WTC11 (cell line): ENCODE measurements at regions of chr10 and their contacts with region 1.

Region 1: DNA sequence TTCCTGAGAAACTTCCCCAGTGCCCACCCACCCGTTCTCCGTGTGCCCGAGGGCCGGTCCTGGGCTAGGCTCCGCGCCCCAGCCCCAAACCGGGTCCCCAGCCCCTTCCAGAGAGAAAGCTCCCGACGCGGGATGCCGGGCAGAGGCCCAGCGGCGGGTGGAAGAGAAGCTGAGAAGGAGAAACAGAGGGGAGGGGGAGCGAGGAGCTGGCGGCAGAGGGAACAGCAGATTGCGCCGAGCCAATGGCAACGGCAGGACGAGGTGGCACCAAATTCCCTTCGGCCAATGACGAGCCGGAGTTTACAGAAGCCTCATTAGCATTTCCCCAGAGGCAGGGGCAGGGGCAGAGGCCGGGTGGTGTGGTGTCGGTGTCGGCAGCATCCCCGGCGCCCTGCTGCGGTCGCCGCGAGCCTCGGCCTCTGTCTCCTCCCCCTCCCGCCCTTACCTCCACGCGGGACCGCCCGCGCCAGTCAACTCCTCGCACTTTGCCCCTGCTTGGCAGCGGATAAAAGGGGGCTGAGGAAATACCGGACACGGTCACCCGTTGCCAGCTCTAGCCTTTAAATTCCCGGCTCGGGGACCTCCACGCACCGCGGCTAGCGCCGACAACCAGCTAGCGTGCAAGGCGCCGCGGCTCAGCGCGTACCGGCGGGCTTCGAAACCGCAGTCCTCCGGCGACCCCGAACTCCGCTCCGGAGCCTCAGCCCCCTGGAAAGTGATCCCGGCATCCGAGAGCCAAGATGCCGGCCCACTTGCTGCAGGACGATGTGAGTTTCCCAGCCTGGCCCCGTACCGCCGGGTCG is at the start of gene SCD:
- DNase-seq: peak; percentile 89
- ATAC-seq: peak; percentile 84
- H3K4me3 Mint-ChIP-seq: peak within 1 kb of the TSS; percentile 96
- H3K27ac Mint-ChIP-seq: peak within 1 kb of the TSS; percentile 98
- H3K4me1 Mint-ChIP-seq: peaks cover 62% of the 10 kb centered on the region
- H3K27me3 Mint-ChIP-seq: no peaks in the 10 kb centered on the region
- CTCF ChIP-seq: no peak
- total RNA-seq, gene SCD: 490 to 556 TPM (median 501 TPM) in 3 replicates

Region 2: GRCh38 chr10:100373298-100374136 is 26.6 kb after region 1 on chr10:
- CTCF ChIA-PET with region 1: interaction called, 21 read pairs
- POLR2A ChIA-PET with region 1: interaction called, 104 read pairs
- DNase-seq: peak; percentile 98
- ATAC-seq: peak; percentile 94
- H3K4me3 Mint-ChIP-seq: no peak overlapping the region
- H3K27ac Mint-ChIP-seq: no peak overlapping the region
- H3K4me1 Mint-ChIP-seq: peaks cover 21% of the 10 kb centered on the region
- H3K27me3 Mint-ChIP-seq: no peaks in the 10 kb centered on the region
- CTCF ChIP-seq: no peak

Region 3: DNA sequence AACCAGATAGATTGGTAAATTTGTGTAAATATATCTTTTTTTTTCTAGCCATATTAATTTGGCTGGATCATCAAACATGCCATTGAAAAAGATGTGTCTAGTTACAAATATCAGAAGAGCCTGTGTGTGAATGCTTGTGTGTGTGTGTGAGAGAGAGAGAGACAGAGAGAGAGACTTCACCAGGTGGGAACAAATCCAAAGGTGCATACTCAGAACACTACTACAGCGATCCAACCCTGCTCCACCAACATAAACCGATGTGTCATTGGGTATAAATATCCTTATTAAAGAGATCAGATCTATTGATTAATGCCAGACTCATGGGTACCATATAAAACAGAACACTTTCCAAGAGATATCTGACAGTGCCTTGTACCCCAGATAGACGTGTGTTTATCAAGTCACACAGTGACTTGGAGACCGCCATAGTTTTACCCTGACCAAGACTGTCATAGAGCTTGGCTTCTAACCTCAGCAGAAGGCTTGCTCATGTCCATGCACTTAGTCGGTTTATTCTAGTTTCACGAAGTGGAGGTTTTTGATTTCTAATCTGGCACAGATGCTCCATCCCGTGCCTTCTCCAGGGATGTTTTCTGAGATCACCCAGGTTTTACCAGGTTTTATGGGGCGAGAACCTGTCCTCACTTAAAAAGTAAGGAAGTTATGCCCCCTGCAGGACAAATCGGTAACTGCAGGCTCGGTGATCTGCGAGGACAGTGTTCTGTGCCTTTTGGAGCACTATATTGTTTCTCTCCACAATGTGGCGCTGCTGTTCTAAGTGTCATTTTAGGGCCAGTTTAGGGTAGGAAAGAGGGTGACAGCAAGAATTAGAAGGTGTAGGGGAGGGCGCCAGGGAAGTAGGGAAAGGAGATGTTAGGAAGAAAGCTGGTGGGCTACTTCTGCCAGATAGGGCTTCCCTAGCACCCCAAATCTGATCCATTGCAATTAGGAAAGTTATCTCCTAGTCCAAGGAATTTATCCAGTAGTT is 86.6 kb after region 1 on chr10:
- CTCF ChIA-PET with region 1: interaction called, 19 read pairs
- POLR2A ChIA-PET with region 1: no interaction called
- DNase-seq: peak; percentile 98
- ATAC-seq: peak; percentile 99
- H3K4me3 Mint-ChIP-seq: no peak overlapping the region
- H3K27ac Mint-ChIP-seq: no peak overlapping the region; the same call in 1 of the 2 replicates
- H3K4me1 Mint-ChIP-seq: peaks cover 6% of the 10 kb centered on the region
- H3K27me3 Mint-ChIP-seq: no peaks in the 10 kb centered on the region; the same call in 1 of the 2 replicates
- CTCF ChIP-seq: peak; percentile 99

Region 4: GRCh38 chr10:100481462-100482081 is 134.6 kb after region 1 on chr10:
- CTCF ChIA-PET with region 1: interaction called, 17 read pairs
- POLR2A ChIA-PET with region 1: interaction called, 4 read pairs
- DNase-seq: peak; percentile 89
- ATAC-seq: peak; percentile 76
- H3K4me3 Mint-ChIP-seq: peak overlapping the region; percentile 75
- H3K27ac Mint-ChIP-seq: no peak overlapping the region
- H3K4me1 Mint-ChIP-seq: peaks cover 40% of the 10 kb centered on the region
- H3K27me3 Mint-ChIP-seq: peaks cover 94% of the 10 kb centered on the region
- CTCF ChIP-seq: no peak

Region 5: GRCh38 chr10:100535715-100536353 is 188.9 kb after region 1 on chr10 and contains the start of gene HIF1AN:
- CTCF ChIA-PET with region 1: interaction called, 18 read pairs
- POLR2A ChIA-PET with region 1: no interaction called
- DNase-seq: peak; percentile 86
- ATAC-seq: peak; percentile 98
- H3K4me3 Mint-ChIP-seq: no peak within 1 kb of the TSS
- H3K27ac Mint-ChIP-seq: peak within 1 kb of the TSS; percentile 73
- H3K4me1 Mint-ChIP-seq: peaks cover 7% of the 10 kb centered on the region; the same call in 1 of the 2 replicates
- H3K27me3 Mint-ChIP-seq: no peaks in the 10 kb centered on the region
- CTCF ChIP-seq: peak; percentile 69
- total RNA-seq, gene HIF1AN: 49.9 to 58.3 TPM (median 53.9 TPM) in 3 replicates

Region 6: DNA sequence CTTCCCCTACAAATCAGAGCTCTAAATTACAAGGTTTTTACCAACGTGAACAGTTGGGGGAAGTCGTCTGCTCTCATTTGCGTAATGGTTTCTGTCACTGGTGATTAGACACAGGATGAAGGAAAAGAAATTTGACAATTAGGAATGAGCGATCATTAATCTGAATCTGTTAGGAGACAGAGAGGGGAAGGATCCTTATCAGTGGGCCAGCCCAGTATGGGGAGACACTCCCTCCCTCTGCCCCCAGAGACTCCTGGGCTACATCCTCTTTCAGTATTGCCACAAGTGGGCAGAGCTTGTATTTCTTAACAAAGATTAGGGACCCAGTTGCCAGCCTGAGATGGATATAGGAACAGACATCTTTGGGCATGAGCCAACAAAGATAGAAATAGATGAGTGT is 204.2 kb after region 1 on chr10:
- CTCF ChIA-PET with region 1: no interaction called
- POLR2A ChIA-PET with region 1: no interaction called
- DNase-seq: no peak
- ATAC-seq: no peak
- H3K4me3 Mint-ChIP-seq: no peak overlapping the region
- H3K27ac Mint-ChIP-seq: no peak overlapping the region
- H3K4me1 Mint-ChIP-seq: no peaks in the 10 kb centered on the region
- H3K27me3 Mint-ChIP-seq: no peaks in the 10 kb centered on the region
- CTCF ChIP-seq: no peak